AG04450 (cell line): ENCODE measurements at regions of chr15 and their contacts with region 1.

Region 1: DNA sequence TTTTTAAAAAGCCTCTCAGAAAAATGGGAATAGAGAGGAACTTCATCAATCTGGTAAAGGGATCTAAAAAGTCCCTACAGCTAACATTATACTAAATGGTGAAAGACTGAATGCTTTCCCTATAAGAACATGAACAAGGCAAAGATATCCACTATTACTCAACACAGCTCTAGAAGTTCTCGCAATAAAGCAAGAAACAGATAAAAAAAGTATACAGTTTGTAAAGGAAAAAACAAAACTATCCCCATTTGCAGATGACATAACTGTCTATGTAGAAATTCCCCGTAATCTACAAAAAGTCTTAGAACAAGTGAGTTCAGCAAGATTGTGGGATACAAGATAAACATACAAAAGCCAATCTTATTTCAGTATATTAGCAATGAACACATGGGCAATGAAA is 15.4 kb downstream of the EDC3 start:
- DNase-seq: no peak
- H3K4me3 ChIP-seq: no peak overlapping the region
- H3K27ac ChIP-seq: no peak overlapping the region
- H3K27me3 ChIP-seq: no peaks in the 10 kb centered on the region
- CTCF ChIP-seq: no peak

Region 2: GRCh38 chr15:74653426-74654123 is 26.9 kb before region 1 on chr15:
- CTCF ChIA-PET with region 1: interaction called, 12 read pairs
- POLR2A ChIA-PET with region 1: no interaction called
- DNase-seq: no peak
- H3K4me3 ChIP-seq: no peak overlapping the region
- H3K27ac ChIP-seq: no peak overlapping the region
- H3K27me3 ChIP-seq: no peaks in the 10 kb centered on the region
- CTCF ChIP-seq: no peak

Region 3: GRCh38 chr15:74754593-74755215 is 74.2 kb after region 1 on chr15:
- CTCF ChIA-PET with region 1: no interaction called
- POLR2A ChIA-PET with region 1: no interaction called
- DNase-seq: no peak
- H3K4me3 ChIP-seq: no peak overlapping the region
- H3K27ac ChIP-seq: no peak overlapping the region
- H3K27me3 ChIP-seq: peaks cover 38% of the 10 kb centered on the region
- CTCF ChIP-seq: no peak